ENCODE measurements at regions of chr4 and their contacts with region 1.

Region 1: GRCh38 chr4:83110223-83110945 is 4.1 kb downstream of the PLAC8 start:
- DNase-seq: peak; percentile 92
- ATAC-seq: peak; percentile 77
- H3K4me3 Mint-ChIP-seq: peak overlapping the region; percentile 97
- H3K27ac Mint-ChIP-seq: peak overlapping the region; percentile 97
- H3K4me1 Mint-ChIP-seq: peaks cover 36% of the 10 kb centered on the region
- H3K27me3 Mint-ChIP-seq: no peaks in the 10 kb centered on the region

Region 2: DNA sequence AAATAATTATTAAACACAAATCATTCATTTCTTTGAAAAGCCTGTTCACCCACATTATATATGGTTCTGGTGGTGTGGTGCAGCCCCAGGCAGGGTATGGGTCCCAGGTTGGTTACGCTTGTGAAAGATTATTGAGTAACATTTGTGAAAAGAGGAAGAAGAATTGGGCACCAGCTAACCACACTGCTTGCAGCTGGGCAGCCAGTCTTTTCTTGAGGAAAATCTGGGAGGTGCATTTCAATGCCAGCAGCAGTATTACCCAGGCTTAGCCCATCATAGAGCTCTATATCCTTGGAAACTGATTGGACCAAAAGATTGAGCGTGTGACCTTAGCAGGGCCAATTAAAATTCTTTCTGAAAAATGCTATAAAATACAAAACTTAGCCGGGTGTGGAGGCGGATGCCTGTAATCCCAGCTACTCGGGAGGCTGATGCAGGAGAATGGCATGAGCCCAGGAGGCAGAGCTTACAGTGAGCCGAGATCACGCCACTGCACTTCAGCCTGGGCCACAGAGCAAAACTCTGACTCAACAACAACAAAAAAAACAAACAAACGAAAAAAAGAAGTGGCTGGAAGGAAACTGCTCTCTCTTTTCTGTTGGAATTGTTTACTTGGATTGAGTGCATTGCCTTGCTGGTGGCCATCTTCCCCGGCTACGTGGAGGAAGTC is 13.9 kb after region 1 on chr4:
- POLR2A ChIA-PET with region 1: interaction called, 12 read pairs
- DNase-seq: no peak
- ATAC-seq: no peak
- H3K4me3 Mint-ChIP-seq: peak overlapping the region; percentile 3
- H3K27ac Mint-ChIP-seq: no peak overlapping the region
- H3K4me1 Mint-ChIP-seq: peaks cover 30% of the 10 kb centered on the region
- H3K27me3 Mint-ChIP-seq: no peaks in the 10 kb centered on the region

Region 3: GRCh38 chr4:83212041-83212851 is 101.9 kb after region 1 on chr4:
- POLR2A ChIA-PET with region 1: interaction called, 252 read pairs
- DNase-seq: peak; percentile 40
- ATAC-seq: peak; percentile 90
- H3K4me3 Mint-ChIP-seq: peak overlapping the region; percentile 79
- H3K27ac Mint-ChIP-seq: peak overlapping the region; percentile 94
- H3K4me1 Mint-ChIP-seq: peaks cover 55% of the 10 kb centered on the region
- H3K27me3 Mint-ChIP-seq: no peaks in the 10 kb centered on the region

Region 4: GRCh38 chr4:83237591-83237990 is 127.2 kb after region 1 on chr4:
- POLR2A ChIA-PET with region 1: interaction called, 20 read pairs
- DNase-seq: no peak
- ATAC-seq: no peak
- H3K4me3 Mint-ChIP-seq: no peak overlapping the region
- H3K27ac Mint-ChIP-seq: no peak overlapping the region
- H3K4me1 Mint-ChIP-seq: peaks cover 64% of the 10 kb centered on the region
- H3K27me3 Mint-ChIP-seq: no peaks in the 10 kb centered on the region

Measured in activated naive CD8-positive, alpha-beta T cell treated with anti-CD3 and anti-CD28 coated beads, Interleukin-2, amount 10 ng/mL, durations not matched to agents 7 days and 5 days (primary cell).